ENCODE measurements at regions of chr1 and their contacts with region 1.

Region 1: GRCh38 chr1:100351095-100351891 is 1.0 kb upstream of the CDC14A start:
- DNase-seq: peak; percentile 90
- H3K4me3 Mint-ChIP-seq: peak overlapping the region; percentile 90
- H3K27ac Mint-ChIP-seq: peak overlapping the region; percentile 96
- H3K4me1 Mint-ChIP-seq: peaks cover 29% of the 10 kb centered on the region
- H3K27me3 Mint-ChIP-seq: no peaks in the 10 kb centered on the region

Region 2: GRCh38 chr1:100037927-100038659 is 313.2 kb before region 1 on chr1:
- CTCF ChIA-PET with region 1: no interaction called
- POLR2A ChIA-PET with region 1: interaction called, 14 read pairs
- DNase-seq: peak; percentile 91
- H3K4me3 Mint-ChIP-seq: peak overlapping the region; percentile 90
- H3K27ac Mint-ChIP-seq: peak overlapping the region; percentile 99
- H3K4me1 Mint-ChIP-seq: peaks cover 61% of the 10 kb centered on the region
- H3K27me3 Mint-ChIP-seq: no peaks in the 10 kb centered on the region

Region 3: DNA sequence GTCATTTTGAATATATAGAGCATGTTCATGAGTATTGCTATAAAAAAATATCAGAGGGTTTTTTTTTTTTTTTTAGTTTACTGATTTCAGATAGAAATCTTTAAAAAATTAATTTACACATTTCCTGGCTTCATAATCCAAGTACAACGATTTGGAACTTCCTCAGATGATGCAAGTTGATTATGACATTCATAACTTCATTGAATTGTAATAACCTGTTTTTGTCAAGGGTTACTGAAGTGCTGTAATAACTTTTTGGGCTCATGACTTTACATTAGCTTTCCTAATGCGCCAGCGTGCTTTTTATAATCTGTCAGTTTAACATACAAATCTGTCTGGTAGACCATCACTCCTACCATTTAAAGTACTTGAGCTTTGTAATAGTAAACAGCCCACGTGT is 299.9 kb before region 1 on chr1:
- CTCF ChIA-PET with region 1: no interaction called
- POLR2A ChIA-PET with region 1: no interaction called
- DNase-seq: no peak
- H3K4me3 Mint-ChIP-seq: no peak overlapping the region
- H3K27ac Mint-ChIP-seq: no peak overlapping the region
- H3K4me1 Mint-ChIP-seq: peaks cover 48% of the 10 kb centered on the region
- H3K27me3 Mint-ChIP-seq: no peaks in the 10 kb centered on the region

Region 4: GRCh38 chr1:100265931-100266740 is 85.2 kb before region 1 on chr1 and contains the start of gene RTCA:
- CTCF ChIA-PET with region 1: interaction called, 15 read pairs
- POLR2A ChIA-PET with region 1: interaction called, 54 read pairs
- DNase-seq: peak; percentile 96
- H3K4me3 Mint-ChIP-seq: peak within 1 kb of the TSS; percentile 98
- H3K27ac Mint-ChIP-seq: peak within 1 kb of the TSS; percentile 93
- H3K4me1 Mint-ChIP-seq: peaks cover 45% of the 10 kb centered on the region
- H3K27me3 Mint-ChIP-seq: peaks cover 3% of the 10 kb centered on the region
- total RNA-seq, gene RTCA: 67.5 to 68.2 TPM

Region 5: GRCh38 chr1:100322436-100323211 is 28.7 kb before region 1 on chr1:
- CTCF ChIA-PET with region 1: no interaction called
- POLR2A ChIA-PET with region 1: no interaction called
- DNase-seq: no peak
- H3K4me3 Mint-ChIP-seq: no peak overlapping the region
- H3K27ac Mint-ChIP-seq: no peak overlapping the region
- H3K4me1 Mint-ChIP-seq: peaks cover 9% of the 10 kb centered on the region
- H3K27me3 Mint-ChIP-seq: no peaks in the 10 kb centered on the region

Region 6: DNA sequence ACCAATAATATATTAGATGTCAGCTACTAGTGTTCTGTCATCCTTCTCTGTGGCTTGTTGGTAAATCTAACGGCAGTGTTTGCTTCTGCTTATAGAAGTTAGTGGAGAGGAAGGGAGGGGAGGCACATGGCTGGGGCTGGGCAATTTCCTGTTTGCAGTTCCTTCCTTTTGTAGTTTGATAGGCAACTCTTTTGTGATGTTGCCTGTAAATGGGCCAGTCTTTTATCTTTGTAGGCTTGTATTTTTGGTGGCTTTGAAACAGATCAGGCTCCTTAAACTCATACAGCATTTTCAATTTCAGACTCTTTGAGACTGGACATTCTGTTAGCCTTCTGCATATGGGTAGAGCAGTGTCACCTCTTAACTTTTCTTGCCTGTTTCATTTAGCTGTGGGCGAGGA is 49.1 kb after region 1 on chr1:
- CTCF ChIA-PET with region 1: interaction called, 22 read pairs
- POLR2A ChIA-PET with region 1: interaction called, 68 read pairs
- DNase-seq: peak; percentile 78
- H3K4me3 Mint-ChIP-seq: peak overlapping the region; percentile 42
- H3K27ac Mint-ChIP-seq: peak overlapping the region; percentile 93
- H3K4me1 Mint-ChIP-seq: peaks cover 87% of the 10 kb centered on the region
- H3K27me3 Mint-ChIP-seq: no peaks in the 10 kb centered on the region

Region 7: GRCh38 chr1:100423832-100424337 is 72.6 kb after region 1 on chr1:
- CTCF ChIA-PET with region 1: interaction called, 18 read pairs
- POLR2A ChIA-PET with region 1: interaction called, 57 read pairs
- DNase-seq: peak; percentile 39
- H3K4me3 Mint-ChIP-seq: peak overlapping the region; percentile 56
- H3K27ac Mint-ChIP-seq: peak overlapping the region; percentile 90
- H3K4me1 Mint-ChIP-seq: peaks cover 60% of the 10 kb centered on the region
- H3K27me3 Mint-ChIP-seq: no peaks in the 10 kb centered on the region

Region 8: DNA sequence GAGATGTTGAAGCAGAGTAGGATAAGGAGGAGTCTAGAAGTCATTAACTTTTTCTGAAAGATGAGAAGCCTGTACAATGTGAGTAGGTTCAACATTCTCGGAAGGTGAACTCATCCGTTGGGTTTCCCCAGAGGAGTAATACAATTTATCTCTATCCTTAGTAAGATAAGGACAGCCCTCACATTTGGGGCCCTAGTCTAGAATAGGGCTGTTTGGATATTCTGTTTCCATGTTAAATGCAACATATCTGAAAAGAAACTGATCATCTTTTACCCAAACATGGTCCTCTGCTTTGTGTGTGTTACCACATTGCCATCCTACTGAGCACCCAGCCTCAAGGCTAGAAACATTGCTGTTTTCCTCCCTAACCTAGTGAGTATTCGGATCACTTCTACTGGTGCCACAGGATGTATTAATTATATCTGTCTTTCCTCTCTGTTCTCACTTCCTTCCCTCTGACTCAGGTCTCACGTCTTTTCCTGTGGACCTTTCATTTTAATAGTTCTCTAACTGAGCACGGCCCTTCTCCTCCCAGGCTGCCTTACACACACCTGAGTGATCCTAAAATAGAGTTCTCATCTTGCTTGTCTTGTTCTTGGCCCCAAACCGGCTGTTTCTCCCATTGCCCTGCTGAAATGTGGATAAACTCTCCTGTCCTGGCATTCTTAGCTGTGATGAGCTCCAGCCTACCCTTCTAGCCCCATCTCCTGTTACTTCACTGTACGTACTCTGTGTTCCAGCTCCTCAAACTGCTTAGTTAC is 92.7 kb after region 1 on chr1:
- CTCF ChIA-PET with region 1: interaction called, 6 read pairs
- POLR2A ChIA-PET with region 1: interaction called, 96 read pairs
- DNase-seq: peak; percentile 50
- H3K4me3 Mint-ChIP-seq: peak overlapping the region; percentile 80
- H3K27ac Mint-ChIP-seq: peak overlapping the region; percentile 98
- H3K4me1 Mint-ChIP-seq: peaks cover 89% of the 10 kb centered on the region
- H3K27me3 Mint-ChIP-seq: no peaks in the 10 kb centered on the region

Region 9: GRCh38 chr1:100459358-100460114 is 108.2 kb after region 1 on chr1:
- CTCF ChIA-PET with region 1: interaction called, 114 read pairs
- POLR2A ChIA-PET with region 1: interaction called, 69 read pairs
- DNase-seq: peak; percentile 78
- H3K4me3 Mint-ChIP-seq: no peak overlapping the region
- H3K27ac Mint-ChIP-seq: peak overlapping the region; percentile 25
- H3K4me1 Mint-ChIP-seq: peaks cover 51% of the 10 kb centered on the region
- H3K27me3 Mint-ChIP-seq: no peaks in the 10 kb centered on the region

Measured in activated CD4-positive, alpha-beta memory T cell treated with anti-CD3 and anti-CD28 coated beads, Interleukin-2, amount 10 ng/mL, durations not matched to agents 7 days and 5 days (primary cell).